Endothelial cell of umbilical vein (primary cell): ENCODE measurements at regions of chr1 and their contacts with region 1.

Region 1: DNA sequence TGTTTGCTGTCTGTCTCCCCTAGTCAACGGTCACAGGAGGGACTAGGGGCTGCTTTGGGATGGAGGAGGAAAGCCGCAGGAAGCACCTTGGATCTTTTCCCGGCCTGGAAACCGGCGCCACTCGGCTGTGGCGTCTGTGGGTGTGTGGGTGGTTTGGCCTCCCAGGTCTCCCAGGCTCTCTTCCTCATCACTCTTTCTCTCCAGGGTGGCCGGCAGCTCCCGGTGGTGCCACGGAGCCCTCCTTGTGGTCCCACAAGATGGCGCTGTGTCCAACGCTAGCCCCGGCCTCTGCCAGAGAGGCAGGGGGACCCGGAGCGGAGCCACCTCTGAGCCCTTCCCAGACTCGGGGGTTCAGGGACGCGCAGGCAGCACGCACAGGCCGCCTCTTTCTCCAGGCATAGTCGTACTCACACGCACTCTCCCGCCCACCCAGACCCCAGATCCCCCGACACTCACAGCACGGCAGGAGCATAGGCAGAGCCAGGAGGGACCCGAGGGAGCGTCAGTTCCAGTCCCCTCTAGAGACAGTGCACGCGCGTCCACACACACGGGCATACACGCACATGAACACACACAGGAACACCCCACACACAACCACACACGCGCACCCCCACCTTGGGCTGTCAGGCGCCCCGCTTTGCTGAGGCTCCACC is 31.2 kb downstream of the CDCP2 start:
- DNase-seq: peak; percentile 74
- H3K4me3 ChIP-seq: peak overlapping the region in 1 of 3 experiments; percentile 2
- H3K27ac ChIP-seq: no peak overlapping the region
- H3K4me1 ChIP-seq: peaks cover 3% of the 10 kb centered on the region
- H3K27me3 ChIP-seq: no peaks in the 10 kb centered on the region
- CTCF ChIP-seq: peak; percentile 77 to 88
- POLR2A ChIP-seq: no peak

Region 2: GRCh38 chr1:53572065-53572814 is 549.4 kb before region 1 on chr1:
- CTCF ChIA-PET with region 1: no interaction called
- POLR2A ChIA-PET with region 1: no interaction called
- dilution Hi-C with region 1: no loop called
- intact Hi-C with region 1: no loop called
- DNase-seq: no peak
- H3K4me3 ChIP-seq: no peak overlapping the region
- H3K27ac ChIP-seq: no peak overlapping the region
- H3K4me1 ChIP-seq: no peaks in the 10 kb centered on the region
- H3K27me3 ChIP-seq: peaks cover 3 to 4% of the 10 kb centered on the region in 2 experiments
- CTCF ChIP-seq: no peak
- POLR2A ChIP-seq: no peak

Region 3: GRCh38 chr1:54137514-54138061 is 16.0 kb after region 1 on chr1:
- CTCF ChIA-PET with region 1: interaction called, 20 read pairs
- POLR2A ChIA-PET with region 1: no interaction called
- dilution Hi-C with region 1: no loop called
- intact Hi-C with region 1: loop called (anchors 1 kb)
- DNase-seq: peak; percentile 86
- H3K4me3 ChIP-seq: no peak overlapping the region
- H3K27ac ChIP-seq: no peak overlapping the region
- H3K4me1 ChIP-seq: peaks cover 10% of the 10 kb centered on the region
- H3K27me3 ChIP-seq: no peaks in the 10 kb centered on the region
- CTCF ChIP-seq: no peak
- POLR2A ChIP-seq: no peak

Region 4: DNA sequence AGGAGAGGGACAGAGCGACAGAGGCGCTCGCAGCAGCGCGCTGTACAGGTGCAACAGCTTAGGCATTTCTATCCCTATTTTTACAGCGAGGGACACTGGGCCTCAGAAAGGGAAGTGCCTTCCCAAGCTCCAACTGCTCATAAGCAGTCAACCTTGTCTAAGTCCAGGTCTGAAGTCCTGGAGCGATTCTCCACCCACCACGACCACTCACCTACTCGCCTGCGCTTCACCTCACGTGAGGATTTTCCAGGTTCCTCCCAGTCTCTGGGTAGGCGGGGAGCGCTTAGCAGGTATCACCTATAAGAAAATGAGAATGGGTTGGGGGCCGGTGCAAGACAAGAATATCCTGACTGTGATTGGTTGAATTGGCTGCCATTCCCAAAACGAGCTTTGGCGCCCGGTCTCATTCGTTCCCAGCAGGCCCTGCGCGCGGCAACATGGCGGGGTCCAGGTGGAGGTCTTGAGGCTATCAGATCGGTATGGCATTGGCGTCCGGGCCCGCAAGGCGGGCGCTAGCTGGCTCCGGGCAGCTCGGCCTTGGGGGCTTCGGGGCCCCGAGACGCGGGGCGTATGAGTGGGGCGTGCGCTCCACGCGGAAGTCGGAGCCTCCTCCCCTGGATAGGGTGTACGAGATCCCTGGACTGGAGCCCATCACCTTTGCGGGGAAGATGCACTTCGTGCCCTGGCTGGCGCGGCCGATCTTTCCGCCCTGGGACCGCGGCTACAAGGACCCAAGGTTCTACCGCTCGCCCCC is 78.3 kb after region 1 on chr1 and contains the starts of genes CYB5RL and MRPL37:
- CTCF ChIA-PET with region 1: interaction called, 20 read pairs
- POLR2A ChIA-PET with region 1: no interaction called
- dilution Hi-C with region 1: no loop called
- intact Hi-C with region 1: loop called (anchors 2 kb)
- DNase-seq: peak; percentile 97
- H3K4me3 ChIP-seq: peak within 1 kb of the TSS; percentile 58 to 67 (median 58)
- H3K27ac ChIP-seq: peak within 1 kb of the TSS; percentile 55
- H3K4me1 ChIP-seq: peaks cover 19% of the 10 kb centered on the region
- H3K27me3 ChIP-seq: no peaks in the 10 kb centered on the region
- CTCF ChIP-seq: no peak
- POLR2A ChIP-seq: peak; percentile 83
- total RNA-seq, gene CYB5RL: 8.6 and 9.6 TPM in 2 replicates
- total RNA-seq, gene MRPL37: 109 TPM in 2 replicates

Region 5: DNA sequence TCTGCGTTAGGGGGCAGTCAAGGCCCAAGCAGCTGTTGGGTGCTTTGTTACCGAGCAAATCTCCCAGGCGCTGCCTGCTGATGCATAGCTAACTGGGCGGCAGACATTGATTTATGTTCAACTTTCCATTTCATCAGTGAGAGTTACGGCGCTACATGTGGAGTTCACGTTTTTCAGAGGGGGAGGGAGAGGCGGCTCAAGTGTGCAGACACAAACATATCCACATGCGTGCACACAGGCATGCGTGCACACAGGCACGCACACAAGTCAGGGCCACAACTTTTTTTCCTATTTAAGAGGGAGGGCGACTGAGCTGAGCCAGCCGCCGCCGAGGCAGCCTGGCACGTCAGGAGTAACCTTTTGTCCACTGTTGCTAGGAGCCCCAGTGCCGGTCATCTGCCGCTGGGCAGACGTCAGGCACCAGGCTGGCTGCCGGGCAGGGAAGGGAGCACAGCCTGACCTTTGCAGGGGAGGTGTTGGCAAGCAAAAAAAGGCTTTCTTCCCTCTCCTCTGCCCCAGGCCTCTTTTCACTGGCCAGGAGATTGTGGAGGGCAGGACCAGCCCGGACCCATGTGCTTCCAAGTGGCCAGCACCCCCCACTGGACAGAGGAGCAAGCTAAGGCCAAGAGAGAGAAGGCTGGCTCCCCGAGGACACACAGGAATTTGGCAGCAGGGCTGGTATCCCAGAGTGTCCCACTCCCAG is 151.6 kb after region 1 on chr1:
- CTCF ChIA-PET with region 1: interaction called, 22 read pairs
- POLR2A ChIA-PET with region 1: no interaction called
- dilution Hi-C with region 1: no loop called
- intact Hi-C with region 1: loop called (anchors 1 kb)
- DNase-seq: peak; percentile 82
- H3K4me3 ChIP-seq: no peak overlapping the region
- H3K27ac ChIP-seq: peak overlapping the region; percentile 30
- H3K4me1 ChIP-seq: peaks cover 19% of the 10 kb centered on the region
- H3K27me3 ChIP-seq: no peaks in the 10 kb centered on the region
- CTCF ChIP-seq: peak; percentile 7 to 62
- POLR2A ChIP-seq: no peak

Region 6: GRCh38 chr1:54499360-54500106 is 377.9 kb after region 1 on chr1:
- CTCF ChIA-PET with region 1: interaction called, 16 read pairs
- POLR2A ChIA-PET with region 1: no interaction called
- dilution Hi-C with region 1: no loop called
- intact Hi-C with region 1: no loop called
- DNase-seq: peak; percentile 43
- H3K4me3 ChIP-seq: peak overlapping the region; percentile 17 to 27 (median 26)
- H3K27ac ChIP-seq: no peak overlapping the region
- H3K4me1 ChIP-seq: peaks cover 4% of the 10 kb centered on the region
- H3K27me3 ChIP-seq: peaks cover 8 to 9% of the 10 kb centered on the region in 2 experiments
- CTCF ChIP-seq: peak in 1 of 2 donors; percentile 51
- POLR2A ChIP-seq: no peak